ENCODE measurements at regions of chr4 and their contacts with region 1.

Region 1: GRCh38 chr4:153950100-153950979 is 161.5 kb upstream of the SFRP2 start:
- DNase-seq: peak; percentile 3
- H3K4me3 ChIP-seq: no peak overlapping the region
- H3K27ac ChIP-seq: no peak overlapping the region
- H3K4me1 ChIP-seq: no peaks in the 10 kb centered on the region
- H3K27me3 ChIP-seq: peaks cover 4% of the 10 kb centered on the region
- CTCF ChIP-seq: no peak

Region 2: GRCh38 chr4:153905231-153905630 is 45.1 kb before region 1 on chr4:
- CTCF ChIA-PET with region 1: no interaction called
- dilution Hi-C with region 1: loop called (anchors 5 kb)
- in situ Hi-C with region 1: no loop called
- intact Hi-C with region 1: no loop called
- DNase-seq: no peak
- H3K4me3 ChIP-seq: no peak overlapping the region
- H3K27ac ChIP-seq: no peak overlapping the region
- H3K4me1 ChIP-seq: no peaks in the 10 kb centered on the region
- H3K27me3 ChIP-seq: no peaks in the 10 kb centered on the region
- CTCF ChIP-seq: no peak

Region 3: DNA sequence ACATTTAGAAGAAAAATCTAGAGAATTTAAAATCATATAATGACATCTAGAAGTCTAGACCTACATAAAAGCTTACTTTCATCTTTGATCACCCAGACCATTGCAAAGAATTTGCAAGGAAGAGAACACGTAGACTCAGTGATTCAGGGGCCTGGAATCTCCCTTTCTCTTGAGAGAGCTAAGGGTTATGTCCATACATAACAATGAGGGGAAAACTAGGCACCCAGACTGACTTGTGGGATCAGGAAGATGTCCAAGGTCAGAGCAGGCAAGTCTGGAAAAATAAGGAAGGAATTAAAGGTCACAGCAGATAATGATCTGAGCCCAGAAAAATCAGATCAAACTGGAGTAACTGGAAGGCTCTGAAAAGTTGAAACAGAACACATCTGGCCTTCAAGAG is 37.0 kb after region 1 on chr4:
- CTCF ChIA-PET with region 1: no interaction called
- dilution Hi-C with region 1: loop called (anchors 5 kb)
- in situ Hi-C with region 1: no loop called
- intact Hi-C with region 1: no loop called
- DNase-seq: peak; percentile 50
- H3K4me3 ChIP-seq: no peak overlapping the region
- H3K27ac ChIP-seq: no peak overlapping the region
- H3K4me1 ChIP-seq: peaks cover 7% of the 10 kb centered on the region
- H3K27me3 ChIP-seq: no peaks in the 10 kb centered on the region
- CTCF ChIP-seq: no peak

Region 4: DNA sequence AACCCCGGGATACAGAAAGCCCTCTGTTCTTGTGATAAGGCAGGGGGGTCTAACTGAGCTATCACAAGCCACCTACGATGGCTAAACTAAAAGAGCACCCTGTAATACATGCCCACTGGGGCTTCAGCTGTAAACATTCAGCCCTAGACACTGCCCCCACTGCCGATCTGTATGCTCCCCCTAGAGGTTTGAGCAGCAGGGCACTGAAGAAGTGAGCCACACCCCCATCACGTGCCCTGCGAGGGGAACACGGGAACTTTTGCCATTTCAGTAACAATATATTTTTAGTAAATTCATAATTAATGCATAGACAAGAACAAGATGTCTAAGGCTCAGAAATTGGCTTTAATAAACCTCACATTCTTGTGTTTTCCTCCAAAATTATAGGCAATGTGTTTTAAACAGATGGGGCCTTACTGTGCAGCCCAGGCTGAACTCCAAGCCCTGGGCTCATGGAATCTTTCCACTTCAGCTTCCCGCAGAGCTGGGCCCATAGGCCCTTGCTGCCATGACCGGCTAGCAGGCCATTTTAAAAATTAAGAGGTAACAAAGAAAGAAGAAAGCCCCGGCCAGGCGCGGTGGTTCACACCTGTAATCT is 73.9 kb after region 1 on chr4:
- CTCF ChIA-PET with region 1: no interaction called
- dilution Hi-C with region 1: loop called (anchors 5 kb)
- in situ Hi-C with region 1: no loop called
- intact Hi-C with region 1: no loop called
- DNase-seq: no peak
- H3K4me3 ChIP-seq: no peak overlapping the region
- H3K27ac ChIP-seq: no peak overlapping the region
- H3K4me1 ChIP-seq: no peaks in the 10 kb centered on the region
- H3K27me3 ChIP-seq: peaks cover 2% of the 10 kb centered on the region
- CTCF ChIP-seq: peak in 1 of 2 donors; percentile 22